ENCODE measurements at regions of chr12 and their contacts with region 1.

Region 1: DNA sequence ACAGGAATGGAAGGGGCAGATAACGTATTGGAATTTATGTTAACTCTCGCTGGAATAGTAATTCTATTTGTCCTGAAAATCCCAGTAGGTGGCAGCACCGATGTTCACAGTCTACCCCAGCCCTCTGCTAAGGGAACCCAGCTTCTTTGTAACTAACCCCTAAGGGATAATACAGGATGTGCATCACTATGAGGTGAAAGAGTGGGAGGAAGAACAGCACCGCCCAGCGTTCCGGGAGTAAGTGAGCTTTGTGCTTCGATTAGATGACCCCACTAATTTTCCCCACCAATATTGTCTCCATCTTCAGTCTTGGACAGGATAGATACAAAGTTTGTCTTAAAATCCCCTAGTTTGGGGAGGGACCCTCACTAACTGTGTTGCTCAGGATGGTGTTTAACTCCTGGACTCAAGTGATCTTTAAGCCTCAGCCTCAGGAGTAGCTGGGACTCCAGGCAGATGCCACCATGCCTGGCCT is 2.7 kb downstream of the SLC2A3 start:
- DNase-seq: peak; percentile 85
- ATAC-seq: peak; percentile 95
- H3K4me3 ChIP-seq: peak overlapping the region; percentile 35; the same call in 1 of the 2 replicates
- H3K27ac ChIP-seq: no peak overlapping the region
- H3K4me1 ChIP-seq: peaks cover 8% of the 10 kb centered on the region; the same call in 1 of the 2 replicates
- H3K27me3 ChIP-seq: no peaks in the 10 kb centered on the region
- CTCF ChIP-seq: peak; percentile 72

Region 2: GRCh38 chr12:7444076-7444475 is 489.2 kb before region 1 on chr12 and contains the start of gene CD163L1:
- CTCF ChIA-PET with region 1: no interaction called
- POLR2A ChIA-PET with region 1: no interaction called
- intact Hi-C with region 1: no loop called
- DNase-seq: no peak
- ATAC-seq: no peak
- H3K4me3 ChIP-seq: no peak within 1 kb of the TSS
- H3K27ac ChIP-seq: no peak within 1 kb of the TSS
- H3K4me1 ChIP-seq: no peaks in the 10 kb centered on the region
- H3K27me3 ChIP-seq: peaks cover 21% of the 10 kb centered on the region
- CTCF ChIP-seq: no peak
- total RNA-seq, gene CD163L1: 0.35 and 0.66 TPM in 2 replicates

Region 3: DNA sequence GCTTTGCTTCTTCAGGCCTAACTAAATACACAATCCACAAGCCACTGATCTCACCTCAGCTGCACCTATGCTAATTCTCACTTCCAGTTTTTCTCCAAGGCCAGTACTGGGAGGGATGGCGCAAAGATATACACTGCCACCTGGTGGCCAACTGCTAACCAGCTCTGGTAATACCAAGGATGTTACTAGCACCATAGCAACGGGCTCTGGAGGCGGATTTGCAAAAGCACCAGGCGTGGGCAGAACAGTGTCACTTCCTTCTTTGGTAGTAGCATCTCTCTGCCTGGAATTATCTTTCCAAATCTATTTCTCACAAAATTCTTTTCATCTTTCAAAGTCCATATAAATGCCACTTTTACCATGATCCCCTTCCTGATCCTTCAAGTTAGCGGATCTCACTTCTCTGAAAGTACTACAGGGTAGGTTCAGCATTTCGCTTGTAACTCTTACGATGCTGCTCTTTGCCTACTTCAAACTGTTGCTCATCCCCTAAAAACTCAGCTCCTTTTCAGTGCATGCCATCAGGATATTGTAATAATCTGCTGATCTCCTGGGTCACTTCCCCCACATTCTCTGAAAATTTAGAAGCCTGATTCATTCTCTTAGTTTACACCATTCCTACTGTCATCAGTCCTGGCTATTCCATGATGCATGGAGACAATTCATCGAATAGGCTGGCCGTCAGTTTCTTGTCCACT is 62.1 kb after region 1 on chr12:
- CTCF ChIA-PET with region 1: interaction called, 7 read pairs
- POLR2A ChIA-PET with region 1: no interaction called
- intact Hi-C with region 1: loop called (anchors 1 kb)
- DNase-seq: peak; percentile 73
- ATAC-seq: peak; percentile 98
- H3K4me3 ChIP-seq: no peak overlapping the region
- H3K27ac ChIP-seq: peak overlapping the region; percentile 75
- H3K4me1 ChIP-seq: peaks cover 4% of the 10 kb centered on the region
- H3K27me3 ChIP-seq: no peaks in the 10 kb centered on the region
- CTCF ChIP-seq: peak; percentile 78

Region 4: DNA sequence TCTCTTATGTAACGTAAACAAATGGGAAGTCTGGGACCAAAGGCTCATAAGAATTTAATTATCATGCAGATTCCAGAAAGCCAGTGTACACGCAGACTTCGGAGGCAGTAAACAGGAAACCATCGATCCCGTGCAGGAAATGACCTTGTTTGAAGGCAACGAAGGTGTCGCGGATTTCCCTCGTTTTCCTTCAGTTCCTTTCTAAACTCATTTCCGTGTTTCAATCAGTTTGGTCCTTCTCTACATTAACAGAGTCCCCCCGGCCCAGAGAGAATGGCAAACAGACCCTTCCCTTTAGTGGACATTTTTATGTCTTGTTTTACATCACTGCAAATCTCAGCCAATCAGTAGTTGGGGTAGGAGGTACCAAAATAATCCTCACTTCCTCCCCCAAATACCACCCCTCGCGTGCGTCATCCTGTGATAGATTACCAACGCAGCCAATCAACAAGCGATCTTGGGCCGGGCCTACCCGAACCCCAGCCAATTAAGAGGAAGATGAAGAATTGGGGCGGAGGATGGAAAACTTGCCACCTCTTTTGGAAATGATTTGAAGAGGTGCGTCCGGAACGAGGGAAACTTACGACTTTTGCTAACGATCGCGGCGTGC is 93.1 kb after region 1 on chr12:
- CTCF ChIA-PET with region 1: interaction called, 24 read pairs
- POLR2A ChIA-PET with region 1: no interaction called
- intact Hi-C with region 1: no loop called
- DNase-seq: peak; percentile 95
- ATAC-seq: peak; percentile 97
- H3K4me3 ChIP-seq: peak overlapping the region; percentile 79
- H3K27ac ChIP-seq: peak overlapping the region; percentile 96
- H3K4me1 ChIP-seq: peaks cover 5% of the 10 kb centered on the region; the same call in 1 of the 2 replicates
- H3K27me3 ChIP-seq: no peaks in the 10 kb centered on the region
- CTCF ChIP-seq: no peak

Measured in PC-3 (cell line).